HCT116 (cell line): ENCODE measurements at regions of chr12 and their contacts with region 1.

Region 1: GRCh38 chr12:111529424-111530368 is 69.4 kb downstream of the ATXN2 start:
- DNase-seq: peak; percentile 34
- ATAC-seq: peak; percentile 92
- H3K4me3 ChIP-seq: no peak overlapping the region
- H3K27ac ChIP-seq: no peak overlapping the region
- H3K4me1 ChIP-seq: no peaks in the 10 kb centered on the region; a peak in 1 of 4 replicates
- H3K27me3 ChIP-seq: no peaks in the 10 kb centered on the region
- CTCF ChIP-seq: peak; percentile 60 to 77 (median 71); a peak in 5 of 6 replicates
- POLR2A ChIP-seq: no peak
- RAD21 ChIP-seq: peak; percentile 61

Region 2: DNA sequence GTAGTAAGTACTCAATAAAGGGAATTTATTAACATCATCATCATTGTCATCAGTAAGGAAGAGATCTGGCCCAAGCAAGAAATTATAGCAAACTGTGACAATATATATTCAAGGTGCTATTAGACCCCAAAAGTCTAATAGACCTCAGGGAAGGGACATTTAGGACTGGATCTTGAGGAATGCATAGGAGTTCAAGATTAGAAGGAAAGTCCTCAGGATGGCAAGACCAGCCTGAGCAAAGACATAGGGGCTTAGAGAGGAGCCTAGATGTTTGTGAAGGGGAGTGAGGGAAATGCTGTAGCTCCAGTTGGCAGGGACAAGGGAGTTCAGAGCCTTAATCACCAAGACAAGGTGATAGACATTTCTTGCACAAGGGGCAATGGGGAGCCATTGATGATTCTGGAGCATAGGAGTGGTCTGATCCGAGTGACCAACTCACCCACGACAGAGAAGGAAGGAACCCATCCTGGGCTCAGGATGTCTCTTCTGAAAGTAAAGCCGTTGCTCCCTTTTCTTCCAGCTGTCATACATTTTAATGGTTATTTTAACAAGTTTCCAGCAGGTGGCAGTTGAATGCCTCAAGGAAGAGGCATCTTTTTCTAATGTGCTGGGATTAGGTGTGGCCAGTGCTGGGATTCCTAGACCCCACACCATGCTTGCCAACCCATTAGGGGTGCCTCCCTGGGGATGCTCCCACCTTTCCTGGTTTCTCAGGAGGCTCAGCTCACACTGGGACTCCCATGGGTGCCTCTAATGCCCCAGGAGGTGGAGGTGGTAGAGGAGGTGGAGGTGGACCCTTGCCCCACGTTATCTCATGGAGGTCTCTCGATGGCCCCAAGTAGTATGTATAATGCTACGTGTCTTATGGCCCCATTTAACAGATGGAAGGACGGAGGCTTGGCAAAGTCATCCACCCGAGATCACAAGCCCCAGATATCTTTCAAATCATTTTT is 198.6 kb before region 1 on chr12:
- CTCF ChIA-PET with region 1: no interaction called
- POLR2A ChIA-PET with region 1: no interaction called
- RAD21 ChIA-PET with region 1: no interaction called
- intact Hi-C with region 1: loop called (anchors 2 kb)
- DNase-seq: peak; percentile 42
- ATAC-seq: peak; percentile 84
- H3K4me3 ChIP-seq: no peak overlapping the region
- H3K27ac ChIP-seq: no peak overlapping the region
- H3K4me1 ChIP-seq: peaks cover 0 to 12% of the 10 kb centered on the region in 2 experiments; a peak in 2 of 4 replicates
- H3K27me3 ChIP-seq: no peaks in the 10 kb centered on the region
- CTCF ChIP-seq: peak; percentile 52 to 77 (median 68)
- POLR2A ChIP-seq: no peak
- RAD21 ChIP-seq: peak; percentile 80

Region 3: DNA sequence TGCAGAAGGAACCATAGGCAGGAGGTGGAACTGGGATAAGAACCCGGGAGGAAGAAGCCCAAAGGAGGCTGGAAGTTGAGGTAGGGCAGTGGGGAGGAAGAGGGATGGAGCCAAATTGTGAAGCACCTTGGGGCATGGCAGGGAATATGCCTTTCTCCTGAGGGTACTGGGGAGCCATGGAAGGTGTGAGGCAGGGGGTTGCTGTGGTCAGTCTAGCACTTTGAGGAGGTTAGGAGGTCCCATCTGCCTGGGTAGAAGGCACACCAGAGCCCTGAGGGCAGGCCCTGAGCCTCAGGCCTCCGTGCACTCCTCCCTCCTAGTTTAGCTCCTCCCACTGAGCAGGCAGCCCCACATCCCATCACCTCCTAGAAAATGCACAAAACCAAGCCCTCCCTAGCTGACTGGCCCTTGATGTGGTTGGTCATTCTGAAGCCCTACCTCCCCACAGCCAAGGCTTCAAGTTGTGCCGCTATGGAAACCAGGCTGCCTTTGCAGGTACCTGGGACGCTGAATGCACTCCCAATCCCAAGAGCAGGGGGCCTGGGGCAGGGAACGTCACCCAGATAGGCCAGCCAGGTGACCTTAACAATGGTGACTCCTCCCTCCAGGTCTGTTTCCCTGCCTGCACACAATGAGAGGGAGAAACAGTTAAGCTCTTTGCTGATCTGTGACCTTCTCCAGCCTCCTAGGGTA is 175.9 kb before region 1 on chr12:
- CTCF ChIA-PET with region 1: no interaction called
- POLR2A ChIA-PET with region 1: no interaction called
- RAD21 ChIA-PET with region 1: no interaction called
- intact Hi-C with region 1: no loop called
- DNase-seq: no peak
- ATAC-seq: peak; percentile 32; the same call in 1 of the 2 replicates
- H3K4me3 ChIP-seq: no peak overlapping the region
- H3K27ac ChIP-seq: no peak overlapping the region
- H3K4me1 ChIP-seq: no peaks in the 10 kb centered on the region
- H3K27me3 ChIP-seq: no peaks in the 10 kb centered on the region
- CTCF ChIP-seq: no peak
- POLR2A ChIP-seq: no peak
- RAD21 ChIP-seq: no peak

Region 4: DNA sequence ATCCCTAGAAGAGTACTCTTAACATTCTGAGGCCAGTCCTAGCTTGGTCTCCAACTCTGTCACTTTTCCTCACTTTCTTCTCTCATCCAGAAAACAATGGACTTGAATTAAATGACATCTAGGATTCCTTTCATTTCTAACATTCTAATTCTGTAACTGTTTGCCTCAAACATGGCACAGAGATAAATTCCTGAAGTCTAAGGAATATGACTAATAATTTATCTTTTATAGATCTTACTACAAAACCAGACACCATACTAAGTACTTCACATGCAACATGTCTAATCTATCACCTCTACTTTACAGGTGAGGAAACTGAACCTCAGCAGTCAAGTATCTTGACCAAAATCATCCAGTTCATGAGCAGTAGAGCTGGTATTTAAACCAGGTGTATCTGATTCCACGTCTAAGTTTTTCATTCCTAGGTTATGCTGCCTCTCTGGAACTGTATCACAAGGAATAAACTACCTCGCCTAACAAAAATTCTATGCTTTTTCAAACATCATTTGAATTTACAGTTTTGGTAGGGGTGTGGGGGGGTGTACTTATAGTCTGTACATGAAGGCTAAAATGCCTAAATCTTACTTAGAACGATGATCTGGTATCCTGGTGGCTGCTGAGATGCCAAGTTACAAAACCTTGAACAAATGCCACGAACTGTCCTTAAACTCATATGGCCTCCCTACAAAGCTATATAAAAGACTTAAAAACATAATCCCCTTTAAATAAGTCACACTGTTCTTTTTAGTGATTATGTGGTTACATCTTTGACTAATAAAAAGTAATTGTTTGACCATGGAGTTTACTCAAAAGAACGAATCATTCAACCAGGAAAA is 27.8 kb after region 1 on chr12:
- CTCF ChIA-PET with region 1: no interaction called
- POLR2A ChIA-PET with region 1: no interaction called
- RAD21 ChIA-PET with region 1: no interaction called
- intact Hi-C with region 1: no loop called
- DNase-seq: no peak
- ATAC-seq: no peak
- H3K4me3 ChIP-seq: no peak overlapping the region
- H3K27ac ChIP-seq: no peak overlapping the region
- H3K4me1 ChIP-seq: peaks cover 0 to 9% of the 10 kb centered on the region in 2 experiments; a peak in 1 of 4 replicates
- H3K27me3 ChIP-seq: no peaks in the 10 kb centered on the region
- CTCF ChIP-seq: no peak
- POLR2A ChIP-seq: no peak
- RAD21 ChIP-seq: no peak